HCT116 (cell line): ENCODE measurements at regions of chr11 and their contacts with region 1.

Region 1: GRCh38 chr11:123020968-123021367 is 39.3 kb upstream of the BSX start:
- DNase-seq: peak; percentile 33
- ATAC-seq: peak; percentile 84
- H3K4me3 ChIP-seq: no peak overlapping the region
- H3K27ac ChIP-seq: no peak overlapping the region
- H3K4me1 ChIP-seq: peaks cover 0 to 11% of the 10 kb centered on the region in 2 experiments; a peak in 2 of 4 replicates
- H3K27me3 ChIP-seq: no peaks in the 10 kb centered on the region
- CTCF ChIP-seq: peak; percentile 65 to 73 (median 73)
- POLR2A ChIP-seq: no peak
- RAD21 ChIP-seq: peak; percentile 73

Region 2: GRCh38 chr11:122796128-122796717 is 224.7 kb before region 1 on chr11:
- CTCF ChIA-PET with region 1: interaction called, 6 read pairs
- POLR2A ChIA-PET with region 1: no interaction called
- RAD21 ChIA-PET with region 1: no interaction called
- intact Hi-C with region 1: loop called (anchors 5 kb)
- DNase-seq: no peak
- ATAC-seq: peak; percentile 92
- H3K4me3 ChIP-seq: no peak overlapping the region
- H3K27ac ChIP-seq: no peak overlapping the region
- H3K4me1 ChIP-seq: peaks cover 0 to 6% of the 10 kb centered on the region in 2 experiments; a peak in 1 of 4 replicates
- H3K27me3 ChIP-seq: no peaks in the 10 kb centered on the region
- CTCF ChIP-seq: peak; percentile 61 to 92 (median 92)
- POLR2A ChIP-seq: no peak
- RAD21 ChIP-seq: peak; percentile 77

Region 3: DNA sequence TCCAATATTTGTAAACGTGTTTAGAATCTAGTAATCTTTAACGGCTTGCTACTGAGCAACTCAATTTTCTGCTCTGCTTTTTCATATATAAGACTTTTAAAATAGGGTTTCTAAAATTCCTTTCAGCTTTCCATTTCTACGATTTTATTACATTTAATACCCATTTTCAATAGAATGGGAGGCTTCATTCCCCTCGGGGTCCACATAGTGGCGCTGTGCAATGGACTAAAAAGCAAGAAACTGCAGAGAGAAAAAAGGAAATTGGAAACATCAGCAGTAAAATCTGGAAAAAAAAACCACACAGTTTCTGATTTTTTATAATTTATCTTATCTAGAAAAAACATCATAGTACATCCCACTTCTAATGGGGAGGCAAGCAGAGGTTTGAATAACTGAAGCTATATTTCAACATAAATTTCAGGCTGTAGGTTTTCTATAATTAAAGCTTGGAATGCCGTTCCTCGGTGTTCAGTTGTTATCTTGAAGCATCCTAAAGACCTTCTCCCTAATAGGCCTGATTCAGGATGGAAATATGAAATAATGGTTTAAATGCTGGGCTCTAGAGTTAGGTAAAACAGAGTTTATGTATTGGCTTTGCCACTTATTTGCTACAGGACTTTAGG is 157.2 kb before region 1 on chr11:
- CTCF ChIA-PET with region 1: interaction called, 132 read pairs
- POLR2A ChIA-PET with region 1: no interaction called
- RAD21 ChIA-PET with region 1: interaction called, 6 read pairs
- intact Hi-C with region 1: loop called (anchors 1 kb)
- DNase-seq: peak; percentile 37
- ATAC-seq: peak; percentile 58; the same call in 1 of the 2 replicates
- H3K4me3 ChIP-seq: no peak overlapping the region
- H3K27ac ChIP-seq: no peak overlapping the region
- H3K4me1 ChIP-seq: peaks cover 0 to 3% of the 10 kb centered on the region in 2 experiments; a peak in 2 of 4 replicates
- H3K27me3 ChIP-seq: peaks cover 4% of the 10 kb centered on the region; the same call in 1 of the 2 replicates
- CTCF ChIP-seq: peak; percentile 88 to 91 (median 88)
- POLR2A ChIP-seq: no peak
- RAD21 ChIP-seq: peak; percentile 83

Region 4: GRCh38 chr11:122910775-122911174 is 110.2 kb before region 1 on chr11:
- CTCF ChIA-PET with region 1: interaction called, 6 read pairs
- POLR2A ChIA-PET with region 1: no interaction called
- RAD21 ChIA-PET with region 1: no interaction called
- intact Hi-C with region 1: loop called (anchors 1 kb)
- DNase-seq: peak; percentile 8
- ATAC-seq: peak; percentile 49; the same call in 1 of the 2 replicates
- H3K4me3 ChIP-seq: no peak overlapping the region
- H3K27ac ChIP-seq: no peak overlapping the region
- H3K4me1 ChIP-seq: no peaks in the 10 kb centered on the region
- H3K27me3 ChIP-seq: no peaks in the 10 kb centered on the region
- CTCF ChIP-seq: peak; percentile 31 to 58 (median 55); a peak in 4 of 6 replicates
- POLR2A ChIP-seq: no peak
- RAD21 ChIP-seq: peak; percentile 75